ENCODE measurements at regions of chr1 and their contacts with region 1.

Region 1: GRCh38 chr1:6343506-6344405 is 49.8 kb downstream of the ACOT7 start:
- DNase-seq: peak; percentile 76
- H3K4me3 Mint-ChIP-seq: no peak overlapping the region
- H3K27ac Mint-ChIP-seq: no peak overlapping the region
- H3K4me1 Mint-ChIP-seq: peaks cover 10% of the 10 kb centered on the region
- H3K27me3 Mint-ChIP-seq: no peaks in the 10 kb centered on the region

Region 2: GRCh38 chr1:6329851-6330250 is 13.9 kb before region 1 on chr1:
- CTCF ChIA-PET with region 1: no interaction called
- POLR2A ChIA-PET with region 1: no interaction called
- intact Hi-C with region 1: no loop called
- DNase-seq: no peak
- H3K4me3 Mint-ChIP-seq: no peak overlapping the region
- H3K27ac Mint-ChIP-seq: no peak overlapping the region
- H3K4me1 Mint-ChIP-seq: no peaks in the 10 kb centered on the region
- H3K27me3 Mint-ChIP-seq: no peaks in the 10 kb centered on the region

Region 3: GRCh38 chr1:6359216-6360116 is 15.7 kb after region 1 on chr1:
- CTCF ChIA-PET with region 1: interaction called, 28 read pairs
- POLR2A ChIA-PET with region 1: interaction called, 5 read pairs
- intact Hi-C with region 1: loop called (anchors 1 kb)
- DNase-seq: peak; percentile 74
- H3K4me3 Mint-ChIP-seq: peak overlapping the region; percentile 55
- H3K27ac Mint-ChIP-seq: peak overlapping the region; percentile 90
- H3K4me1 Mint-ChIP-seq: peaks cover 42% of the 10 kb centered on the region
- H3K27me3 Mint-ChIP-seq: no peaks in the 10 kb centered on the region

Region 4: DNA sequence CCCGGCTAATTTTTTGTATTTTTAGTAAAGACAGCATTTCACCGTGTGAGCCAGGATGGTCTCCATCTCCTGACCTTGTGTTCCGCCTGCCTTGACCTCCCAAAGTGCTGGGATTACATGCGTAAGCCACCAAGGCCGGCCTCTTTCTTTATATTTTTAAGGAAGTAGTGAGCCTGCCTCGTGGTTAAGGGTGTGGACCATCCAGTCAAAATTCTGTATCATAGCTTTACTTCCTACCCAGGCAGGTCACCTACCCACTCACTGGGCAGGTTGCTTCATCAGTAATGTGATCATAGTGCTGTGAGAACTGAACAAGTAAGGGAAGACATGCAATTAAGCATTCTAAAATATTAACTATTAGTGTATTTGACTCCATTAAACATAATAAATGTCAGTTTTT is 57.9 kb after region 1 on chr1:
- CTCF ChIA-PET with region 1: interaction called, 65 read pairs
- POLR2A ChIA-PET with region 1: no interaction called
- intact Hi-C with region 1: loop called (anchors 1 kb)
- DNase-seq: no peak
- H3K4me3 Mint-ChIP-seq: no peak overlapping the region
- H3K27ac Mint-ChIP-seq: no peak overlapping the region
- H3K4me1 Mint-ChIP-seq: peaks cover 3% of the 10 kb centered on the region
- H3K27me3 Mint-ChIP-seq: no peaks in the 10 kb centered on the region

Region 5: GRCh38 chr1:6438047-6438525 is 94.3 kb after region 1 on chr1:
- CTCF ChIA-PET with region 1: interaction called, 16 read pairs
- POLR2A ChIA-PET with region 1: no interaction called
- intact Hi-C with region 1: no loop called
- DNase-seq: peak; percentile 82
- H3K4me3 Mint-ChIP-seq: no peak overlapping the region
- H3K27ac Mint-ChIP-seq: no peak overlapping the region
- H3K4me1 Mint-ChIP-seq: peaks cover 6% of the 10 kb centered on the region
- H3K27me3 Mint-ChIP-seq: peaks cover 19% of the 10 kb centered on the region